ENCODE measurements at regions of chr1 and their contacts with region 1.

Region 1: DNA sequence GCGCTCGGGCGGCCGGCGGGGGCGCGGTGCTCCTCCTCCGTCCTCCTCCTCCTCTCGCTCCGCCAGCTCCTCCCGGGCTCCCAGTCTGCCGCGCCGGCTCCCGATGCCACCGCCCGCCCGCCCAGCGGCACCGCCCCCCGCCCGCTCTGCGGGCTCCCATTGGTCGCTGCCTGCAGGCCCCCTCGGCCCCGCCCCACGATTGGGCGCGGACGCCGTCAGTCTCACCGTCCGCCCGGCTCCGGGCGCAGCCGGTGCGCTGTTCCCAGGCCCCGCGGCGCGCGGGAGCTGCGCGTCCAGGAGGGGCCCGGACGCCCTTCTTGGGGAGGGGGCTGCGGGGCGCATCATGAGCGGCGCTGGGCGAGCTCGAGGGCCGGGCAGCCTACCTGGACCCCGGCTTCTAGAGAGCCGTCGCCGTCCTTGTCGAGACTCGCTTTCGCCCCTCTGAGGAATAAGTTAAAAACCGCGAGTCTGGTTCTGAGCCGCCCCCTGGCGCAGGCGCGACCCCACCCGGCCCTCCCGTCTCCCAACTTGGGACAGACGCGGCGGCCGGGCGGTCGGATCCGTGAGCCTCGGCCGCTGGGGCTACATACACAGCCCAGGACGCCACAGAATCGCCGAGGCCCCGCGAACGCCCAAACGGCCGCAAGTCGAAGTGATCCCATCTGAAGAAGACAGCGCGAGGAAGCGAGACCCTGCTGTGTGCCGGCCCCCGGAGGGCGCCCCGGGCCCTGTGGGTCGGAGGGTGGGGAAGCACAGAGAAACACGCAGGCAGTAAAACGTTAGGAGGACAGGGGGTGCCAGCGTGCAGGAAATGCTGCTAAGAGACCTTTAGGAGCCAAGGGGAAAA is at the start of gene SIPA1L2:
- DNase-seq: peak; percentile 87 to 97
- H3K4me3 ChIP-seq: peak within 1 kb of the TSS; percentile 77
- H3K4me3 Mint-ChIP-seq: peak within 1 kb of the TSS; percentile 91
- H3K27ac Mint-ChIP-seq: peak within 1 kb of the TSS; percentile 79
- H3K4me1 ChIP-seq: peaks cover 20% of the 10 kb centered on the region
- H3K4me1 Mint-ChIP-seq: peaks cover 5% of the 10 kb centered on the region
- H3K27me3 ChIP-seq: no peaks in the 10 kb centered on the region
- H3K27me3 Mint-ChIP-seq: no peaks in the 10 kb centered on the region
- CTCF ChIP-seq: peak; percentile 48 to 73
- total RNA-seq, gene SIPA1L2: 13.2 and 18.6 TPM in 2 replicates

Region 2: DNA sequence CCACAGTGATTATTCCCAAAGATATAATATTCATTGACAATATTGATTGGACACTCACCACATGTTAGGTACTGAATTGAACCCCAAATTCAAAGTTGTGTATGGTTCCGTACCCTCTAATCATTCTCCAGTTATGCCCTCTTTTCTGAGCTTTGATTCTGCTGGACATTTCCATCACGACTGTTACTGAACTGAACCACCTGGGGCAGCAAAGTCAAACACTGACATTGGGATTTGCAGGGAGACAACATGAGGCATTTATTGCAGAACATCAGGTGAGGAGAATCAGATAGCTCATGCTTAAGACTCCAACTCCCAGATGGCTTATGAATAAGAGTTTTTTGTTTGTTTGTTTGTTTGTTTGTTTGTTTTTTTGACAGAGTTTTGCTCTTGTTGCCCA is 582.8 kb before region 1 on chr1:
- CTCF ChIA-PET with region 1: interaction called, 7 read pairs
- POLR2A ChIA-PET with region 1: no interaction called
- intact Hi-C with region 1: loop called (anchors 1 kb)
- DNase-seq: peak in 1 of 2 experiments; percentile 13
- H3K4me3 ChIP-seq: no peak overlapping the region
- H3K4me3 Mint-ChIP-seq: no peak overlapping the region
- H3K27ac Mint-ChIP-seq: no peak overlapping the region
- H3K4me1 ChIP-seq: no peaks in the 10 kb centered on the region
- H3K4me1 Mint-ChIP-seq: no peaks in the 10 kb centered on the region
- H3K27me3 ChIP-seq: no peaks in the 10 kb centered on the region
- H3K27me3 Mint-ChIP-seq: peaks cover 21% of the 10 kb centered on the region
- CTCF ChIP-seq: peak in 1 of 2 experiments; percentile 49

Region 3: GRCh38 chr1:232467073-232467760 is 163.1 kb before region 1 on chr1:
- CTCF ChIA-PET with region 1: interaction called, 4 read pairs
- POLR2A ChIA-PET with region 1: no interaction called
- intact Hi-C with region 1: loop called (anchors 5 kb)
- DNase-seq: no peak
- H3K4me3 ChIP-seq: no peak overlapping the region
- H3K4me3 Mint-ChIP-seq: no peak overlapping the region
- H3K27ac Mint-ChIP-seq: no peak overlapping the region
- H3K4me1 ChIP-seq: no peaks in the 10 kb centered on the region
- H3K4me1 Mint-ChIP-seq: no peaks in the 10 kb centered on the region
- H3K27me3 ChIP-seq: no peaks in the 10 kb centered on the region
- H3K27me3 Mint-ChIP-seq: no peaks in the 10 kb centered on the region
- CTCF ChIP-seq: no peak

Region 4: DNA sequence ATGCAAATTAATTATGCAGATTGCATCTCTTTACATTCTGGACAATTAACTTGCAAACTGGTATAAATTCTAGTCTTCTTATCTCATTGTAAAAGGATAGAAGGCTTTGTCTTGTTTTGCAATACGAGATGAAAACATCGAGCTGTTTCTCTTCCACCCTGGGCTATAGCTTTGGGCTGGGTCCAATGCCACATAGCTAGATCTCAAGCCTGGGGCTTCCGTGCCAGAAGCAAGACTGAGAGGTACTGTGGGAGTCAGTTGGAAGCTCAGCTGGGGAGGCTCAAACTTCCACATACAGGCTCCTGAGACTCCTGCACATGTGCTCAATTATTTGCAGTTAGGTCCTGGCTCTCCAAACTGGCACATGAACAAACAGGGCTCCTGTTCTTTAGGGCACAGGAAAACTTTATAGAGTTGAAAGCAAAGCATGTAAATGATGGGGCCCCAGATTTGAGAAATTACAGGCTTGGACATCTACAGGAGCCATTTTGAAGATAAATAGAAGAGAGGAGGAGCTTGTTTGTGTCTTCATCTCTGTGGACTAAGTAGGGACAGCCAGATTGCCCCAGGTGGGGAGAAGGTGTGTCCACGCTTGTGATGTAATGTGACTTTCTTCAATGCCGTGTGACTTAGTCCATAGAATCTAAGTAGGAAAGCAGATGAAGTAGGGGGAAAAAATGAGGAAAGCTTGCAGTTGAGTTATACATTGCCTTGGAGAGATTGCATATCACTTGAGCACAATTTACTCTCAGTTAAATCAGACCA is 65.5 kb after region 1 on chr1:
- CTCF ChIA-PET with region 1: no interaction called
- POLR2A ChIA-PET with region 1: no interaction called
- intact Hi-C with region 1: no loop called
- DNase-seq: no peak
- H3K4me3 ChIP-seq: no peak overlapping the region
- H3K4me3 Mint-ChIP-seq: no peak overlapping the region
- H3K27ac Mint-ChIP-seq: no peak overlapping the region
- H3K4me1 ChIP-seq: no peaks in the 10 kb centered on the region
- H3K4me1 Mint-ChIP-seq: no peaks in the 10 kb centered on the region
- H3K27me3 ChIP-seq: no peaks in the 10 kb centered on the region
- H3K27me3 Mint-ChIP-seq: no peaks in the 10 kb centered on the region
- CTCF ChIP-seq: no peak

Region 5: GRCh38 chr1:232725305-232726047 is 95.2 kb after region 1 on chr1:
- CTCF ChIA-PET with region 1: no interaction called
- POLR2A ChIA-PET with region 1: no interaction called
- intact Hi-C with region 1: loop called (anchors 1 kb)
- DNase-seq: no peak
- H3K4me3 ChIP-seq: no peak overlapping the region
- H3K4me3 Mint-ChIP-seq: no peak overlapping the region
- H3K27ac Mint-ChIP-seq: no peak overlapping the region
- H3K4me1 ChIP-seq: no peaks in the 10 kb centered on the region
- H3K4me1 Mint-ChIP-seq: no peaks in the 10 kb centered on the region
- H3K27me3 ChIP-seq: no peaks in the 10 kb centered on the region
- H3K27me3 Mint-ChIP-seq: peaks cover 5% of the 10 kb centered on the region
- CTCF ChIP-seq: no peak

Region 6: DNA sequence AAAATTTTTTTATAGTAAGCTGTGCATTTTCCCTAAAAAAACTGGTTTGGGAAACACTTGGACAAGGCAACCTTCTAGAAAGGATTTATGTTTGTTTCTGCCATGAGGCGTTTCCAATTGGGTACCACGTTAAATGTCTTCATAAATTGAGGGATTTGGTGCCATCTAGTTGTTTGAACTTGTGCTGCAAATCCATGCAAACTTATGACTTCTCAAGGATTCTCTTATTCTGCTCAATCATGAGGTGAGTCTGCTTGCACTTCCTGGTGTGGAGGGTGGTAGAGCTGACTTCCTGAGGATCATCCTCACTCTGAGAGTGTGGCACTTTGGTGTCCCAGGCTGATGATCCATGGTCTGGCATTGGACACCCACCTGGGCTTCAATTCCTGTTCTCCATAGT is 542.0 kb after region 1 on chr1:
- CTCF ChIA-PET with region 1: no interaction called
- POLR2A ChIA-PET with region 1: no interaction called
- intact Hi-C with region 1: loop called (anchors 10 kb)
- DNase-seq: peak in 1 of 2 experiments; percentile 3
- H3K4me3 ChIP-seq: no peak overlapping the region
- H3K4me3 Mint-ChIP-seq: no peak overlapping the region
- H3K27ac Mint-ChIP-seq: no peak overlapping the region
- H3K4me1 ChIP-seq: no peaks in the 10 kb centered on the region
- H3K4me1 Mint-ChIP-seq: no peaks in the 10 kb centered on the region
- H3K27me3 ChIP-seq: no peaks in the 10 kb centered on the region
- H3K27me3 Mint-ChIP-seq: no peaks in the 10 kb centered on the region
- CTCF ChIP-seq: peak in 1 of 2 experiments; percentile 7